Dorsolateral prefrontal cortex (tissue), 120 donors: ENCODE measurements at regions of chr20 and their contacts with region 1.

Region 1: DNA sequence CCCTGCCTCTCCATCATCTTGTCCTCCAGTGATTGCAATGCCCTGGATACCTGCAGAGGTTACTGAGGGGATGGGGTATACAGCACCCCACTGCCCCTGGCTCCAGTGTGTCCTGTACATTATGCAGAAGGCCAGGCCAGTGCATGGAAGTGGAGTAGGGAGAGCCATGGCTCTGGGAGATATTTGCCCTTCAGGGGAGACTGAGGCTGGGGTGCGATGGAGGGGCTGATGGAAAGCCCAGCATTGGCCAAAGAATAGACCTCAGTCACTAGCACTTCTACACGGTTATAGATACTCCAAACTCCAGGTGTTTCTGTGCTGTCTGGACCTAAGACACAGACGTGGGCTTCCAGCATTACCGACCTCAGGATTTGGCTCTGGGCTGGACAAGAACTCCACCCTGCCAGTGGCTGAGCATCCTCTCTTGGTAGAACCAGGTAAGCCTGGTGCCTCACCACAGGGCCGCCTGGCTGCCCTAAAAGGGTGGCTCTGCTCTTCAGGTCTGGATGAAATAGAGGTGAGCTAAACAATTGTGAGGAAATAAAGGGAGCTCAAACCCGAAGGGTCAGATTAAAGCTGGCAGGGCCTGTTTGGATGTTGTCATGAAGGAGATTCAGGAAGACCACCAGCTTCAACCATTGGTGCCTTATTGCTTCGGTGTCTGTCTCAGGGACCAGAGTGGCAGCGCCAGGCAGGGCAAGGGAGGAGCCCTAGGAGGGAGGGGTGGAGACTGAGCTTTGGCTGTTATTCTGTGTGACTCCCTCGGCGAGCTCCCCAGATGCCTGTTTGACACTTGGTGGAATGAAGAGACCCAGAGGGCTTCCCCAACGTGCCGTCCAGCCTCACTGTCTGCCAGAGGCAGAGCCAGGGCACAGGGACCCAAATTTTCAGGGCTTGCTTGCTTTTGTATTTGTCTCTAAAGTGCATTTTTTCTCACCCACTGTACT is 8.4 kb downstream of the SYNDIG1 start:
- DNase-seq: peak in 2 of 10 donors; percentile 38 to 41
- H3K4me3 ChIP-seq: peak overlapping the region in 2 of 59 donors; percentile 26 to 27
- H3K27ac ChIP-seq: peak overlapping the region in 47 of 59 donors; percentile 5 to 83 (median 56)
- H3K27me3 ChIP-seq: peaks cover 0 to 3% (median 0%) of the 10 kb centered on the region in 45 donors
- CTCF ChIP-seq: no peak

Region 2: GRCh38 chr20:24445510-24446170 is 32.2 kb before region 1 on chr20:
- intact Hi-C with region 1: no loop called
- DNase-seq: no peak
- H3K4me3 ChIP-seq: no peak overlapping the region
- H3K27ac ChIP-seq: peak overlapping the region in 2 of 59 donors; percentile 35 to 36
- H3K27me3 ChIP-seq: no peaks in the 10 kb centered on the region
- CTCF ChIP-seq: no peak

Region 3: GRCh38 chr20:24560571-24561491 is 83.0 kb after region 1 on chr20:
- intact Hi-C with region 1: no loop called
- DNase-seq: no peak
- H3K4me3 ChIP-seq: no peak overlapping the region
- H3K27ac ChIP-seq: peak overlapping the region in 17 of 59 donors; percentile 9 to 65 (median 27)
- H3K27me3 ChIP-seq: no peaks in the 10 kb centered on the region
- CTCF ChIP-seq: no peak

Region 4: DNA sequence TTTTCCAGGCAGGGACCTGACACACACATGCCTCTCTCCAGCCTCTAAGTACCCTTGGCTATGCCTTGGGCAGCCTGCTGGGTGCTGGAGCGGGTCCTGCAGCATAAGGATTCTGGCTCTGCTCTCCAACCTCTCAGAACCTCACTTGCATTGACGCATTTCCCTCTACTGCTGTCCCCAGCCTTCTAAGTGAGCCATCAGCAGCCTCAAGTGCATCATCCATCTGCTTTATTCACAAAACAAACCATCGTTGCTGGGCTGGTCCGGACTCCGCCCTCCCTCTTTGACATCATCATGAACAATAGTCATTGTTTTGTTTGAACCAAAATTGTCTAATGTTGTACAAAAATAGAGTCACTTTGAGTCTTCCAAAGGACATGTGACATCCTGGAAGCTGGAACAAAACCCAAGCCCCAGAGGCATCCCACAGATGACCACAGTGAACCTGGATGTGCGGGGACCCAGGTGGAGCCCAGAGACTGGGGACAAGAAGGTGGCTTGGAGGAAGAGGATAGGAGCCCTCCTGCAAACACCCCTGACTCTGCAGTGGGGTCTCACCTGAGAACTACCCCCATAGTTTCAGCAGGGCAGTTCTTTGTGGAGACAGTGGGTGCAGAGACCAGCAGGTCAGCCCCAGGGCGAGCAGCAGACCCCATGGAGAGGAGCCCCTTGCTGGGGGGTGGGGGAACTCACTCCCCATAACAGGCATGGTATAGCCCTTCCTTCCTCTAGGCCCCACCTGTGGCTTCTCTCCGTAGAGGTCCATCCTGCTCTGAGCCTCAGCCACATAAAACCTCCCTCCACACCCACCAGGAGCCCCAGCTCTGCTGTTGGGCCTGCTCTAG is 221.7 kb after region 1 on chr20:
- intact Hi-C with region 1: loop called in 1 of 2 experiments (anchors 5 kb)
- DNase-seq: peak in 5 of 10 donors; percentile 38 to 72 (median 57)
- H3K4me3 ChIP-seq: peak overlapping the region in 1 of 59 donors; percentile 8
- H3K27ac ChIP-seq: peak overlapping the region in 45 of 59 donors; percentile 3 to 87 (median 64)
- H3K27me3 ChIP-seq: no peaks in the 10 kb centered on the region
- CTCF ChIP-seq: peak in 1 of 56 donors; percentile 6